ENCODE measurements at regions of chr4 and their contacts with region 1.

Region 1: GRCh38 chr4:16764622-16765021 is 133.8 kb downstream of the LDB2 start:
- DNase-seq: peak in 1 of 2 experiments; percentile 54
- H3K4me3 ChIP-seq: no peak overlapping the region
- H3K27ac ChIP-seq: no peak overlapping the region
- H3K4me1 ChIP-seq: peaks cover 0 to 9% (median 1%) of the 10 kb centered on the region in 4 experiments; a peak in 2 of 7 replicates
- H3K27me3 ChIP-seq: no peaks in the 10 kb centered on the region
- CTCF ChIP-seq: peak; percentile 64 to 81 (median 73)
- EP300 ChIP-seq: no peak
- POLR2A ChIP-seq: no peak
- RAD21 ChIP-seq: peak; percentile 85 to 90

Region 2: GRCh38 chr4:16739997-16740624 is 24.5 kb before region 1 on chr4:
- CTCF ChIA-PET with region 1: no interaction called
- POLR2A ChIA-PET with region 1: no interaction called
- DNase-seq: no peak
- H3K4me3 ChIP-seq: no peak overlapping the region
- H3K27ac ChIP-seq: no peak overlapping the region
- H3K4me1 ChIP-seq: no peaks in the 10 kb centered on the region
- H3K27me3 ChIP-seq: no peaks in the 10 kb centered on the region
- CTCF ChIP-seq: no peak
- EP300 ChIP-seq: no peak
- POLR2A ChIP-seq: no peak
- RAD21 ChIP-seq: no peak

Region 3: DNA sequence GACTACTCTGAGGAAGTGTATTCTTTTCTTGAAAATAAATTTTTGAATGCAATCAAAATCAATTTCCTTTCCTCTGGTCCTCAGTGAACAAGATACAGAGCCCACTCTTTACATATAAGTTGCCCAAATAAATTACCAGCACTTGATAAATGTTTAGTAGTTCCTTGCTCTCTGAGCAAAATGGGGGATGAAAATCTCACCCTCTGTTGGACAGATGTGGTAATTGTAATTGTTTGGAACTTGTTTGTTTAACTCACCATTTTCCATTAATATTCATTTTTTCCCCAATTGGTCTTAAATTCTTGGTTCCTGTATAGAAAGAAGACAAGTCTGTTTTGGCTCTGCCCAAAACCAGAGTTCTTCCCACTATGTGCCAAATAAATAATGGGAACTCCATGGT is 12.5 kb before region 1 on chr4:
- CTCF ChIA-PET with region 1: interaction called, 13 read pairs
- POLR2A ChIA-PET with region 1: no interaction called
- DNase-seq: no peak
- H3K4me3 ChIP-seq: no peak overlapping the region
- H3K27ac ChIP-seq: no peak overlapping the region
- H3K4me1 ChIP-seq: peaks cover 0 to 5% (median 4%) of the 10 kb centered on the region in 4 experiments; a peak in 4 of 7 replicates
- H3K27me3 ChIP-seq: no peaks in the 10 kb centered on the region
- CTCF ChIP-seq: peak in 1 of 3 experiments; percentile 12; a peak in 2 of 4 replicates
- EP300 ChIP-seq: no peak
- POLR2A ChIP-seq: no peak
- RAD21 ChIP-seq: peak; percentile 22 to 24; a peak in 2 of 4 replicates

Region 4: GRCh38 chr4:16775411-16776154 is 11.0 kb after region 1 on chr4:
- CTCF ChIA-PET with region 1: interaction called, 12 read pairs
- POLR2A ChIA-PET with region 1: no interaction called
- DNase-seq: no peak
- H3K4me3 ChIP-seq: no peak overlapping the region
- H3K27ac ChIP-seq: no peak overlapping the region
- H3K4me1 ChIP-seq: peaks cover 3 to 10% (median 8%) of the 10 kb centered on the region in 4 experiments; a peak in 4 of 7 replicates
- H3K27me3 ChIP-seq: no peaks in the 10 kb centered on the region
- CTCF ChIP-seq: no peak
- EP300 ChIP-seq: no peak
- POLR2A ChIP-seq: no peak
- RAD21 ChIP-seq: no peak

Region 5: GRCh38 chr4:17324386-17324830 is 559.8 kb after region 1 on chr4:
- CTCF ChIA-PET with region 1: interaction called, 12 read pairs
- POLR2A ChIA-PET with region 1: interaction called, 3 read pairs
- DNase-seq: peak in 1 of 2 experiments; percentile 72
- H3K4me3 ChIP-seq: no peak overlapping the region
- H3K27ac ChIP-seq: no peak overlapping the region
- H3K4me1 ChIP-seq: peaks cover 0 to 7% (median 3%) of the 10 kb centered on the region in 4 experiments; a peak in 1 of 7 replicates
- H3K27me3 ChIP-seq: 0 out of 7 replicates have a peak, but pooled peaks cover 0 to 3% (median 0%) of the 10 kb centered on the region in 4 experiments
- CTCF ChIP-seq: peak in 2 of 3 experiments; percentile 46 to 67; a peak in 3 of 4 replicates
- EP300 ChIP-seq: no peak
- POLR2A ChIP-seq: no peak
- RAD21 ChIP-seq: peak; percentile 91

Measured in H1 (cell line).